B cell (primary cell): ENCODE measurements at regions of chr10 and their contacts with region 1.

Region 1: DNA sequence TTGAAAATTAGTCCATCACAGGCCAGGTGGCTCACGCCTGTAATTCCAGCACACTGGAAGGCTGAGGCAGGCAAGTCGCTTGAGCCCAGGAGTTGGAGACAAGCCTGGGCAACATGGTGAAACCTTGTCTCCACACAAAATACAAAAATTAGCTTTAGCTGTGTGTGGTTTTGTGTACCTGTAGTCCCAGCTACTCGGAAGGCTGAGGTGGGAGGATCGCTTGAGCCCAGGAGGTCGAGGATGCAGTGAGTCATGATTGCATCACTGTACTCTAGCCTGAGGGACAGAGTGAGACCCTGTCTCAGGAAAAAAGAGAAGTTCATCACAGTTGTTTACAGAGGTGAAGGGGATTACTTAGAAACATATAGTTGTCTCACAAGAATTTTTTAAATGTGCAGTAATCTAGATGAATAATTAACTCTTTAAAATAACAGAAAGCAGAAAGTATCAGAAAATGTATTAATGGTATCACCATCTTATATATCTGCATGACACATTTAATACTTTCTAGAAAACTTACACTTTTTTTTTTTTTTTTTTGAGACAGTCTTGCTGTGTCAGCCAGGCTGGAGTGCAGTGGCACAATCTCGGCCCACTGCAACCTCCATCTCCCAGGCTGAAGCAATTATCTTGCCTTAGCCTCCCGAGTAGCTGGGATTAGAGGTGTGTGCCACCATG is 8.9 kb downstream of the LCOR start:
- DNase-seq: no peak
- ATAC-seq: peak; percentile 69
- H3K4me3 ChIP-seq: no peak overlapping the region
- H3K4me3 Mint-ChIP-seq: peak overlapping the region; percentile 26
- H3K27ac ChIP-seq: no peak overlapping the region
- H3K27ac Mint-ChIP-seq: no peak overlapping the region
- H3K4me1 ChIP-seq: peaks cover 7 to 45% of the 10 kb centered on the region in 2 donors
- H3K4me1 Mint-ChIP-seq: peaks cover 65% of the 10 kb centered on the region
- H3K27me3 ChIP-seq: no peaks in the 10 kb centered on the region
- H3K27me3 Mint-ChIP-seq: no peaks in the 10 kb centered on the region
- CTCF ChIP-seq: no peak

Region 2: DNA sequence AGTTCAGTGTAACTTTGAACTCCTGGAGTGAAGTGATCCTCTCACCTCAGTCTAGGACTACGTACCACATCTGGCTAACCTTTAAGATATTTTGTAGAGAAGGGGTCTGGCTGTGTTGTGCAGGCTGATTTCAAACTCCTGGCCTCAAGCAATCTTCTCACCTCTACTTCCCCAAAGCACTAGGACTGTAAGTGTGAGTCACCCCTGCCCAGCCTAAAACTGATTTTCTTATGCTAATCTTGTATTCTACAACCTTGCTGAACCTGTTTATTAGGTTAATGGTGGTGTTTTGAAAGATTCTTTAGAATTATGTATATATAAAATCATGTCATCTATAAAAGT is 49.2 kb after region 1 on chr10:
- CTCF ChIA-PET with region 1: no interaction called
- POLR2A ChIA-PET with region 1: no interaction called
- intact Hi-C with region 1: loop called (anchors 10 kb)
- DNase-seq: no peak
- ATAC-seq: no peak
- H3K4me3 ChIP-seq: no peak overlapping the region
- H3K4me3 Mint-ChIP-seq: no peak overlapping the region
- H3K27ac ChIP-seq: peak overlapping the region in 1 of 2 donors; percentile 13
- H3K27ac Mint-ChIP-seq: peak overlapping the region; percentile 32
- H3K4me1 ChIP-seq: peaks cover 0 to 4% of the 10 kb centered on the region in 2 donors
- H3K4me1 Mint-ChIP-seq: peaks cover 35% of the 10 kb centered on the region
- H3K27me3 ChIP-seq: no peaks in the 10 kb centered on the region
- H3K27me3 Mint-ChIP-seq: no peaks in the 10 kb centered on the region
- CTCF ChIP-seq: no peak